ENCODE measurements at regions of chr6 and their contacts with region 1.

Region 1: DNA sequence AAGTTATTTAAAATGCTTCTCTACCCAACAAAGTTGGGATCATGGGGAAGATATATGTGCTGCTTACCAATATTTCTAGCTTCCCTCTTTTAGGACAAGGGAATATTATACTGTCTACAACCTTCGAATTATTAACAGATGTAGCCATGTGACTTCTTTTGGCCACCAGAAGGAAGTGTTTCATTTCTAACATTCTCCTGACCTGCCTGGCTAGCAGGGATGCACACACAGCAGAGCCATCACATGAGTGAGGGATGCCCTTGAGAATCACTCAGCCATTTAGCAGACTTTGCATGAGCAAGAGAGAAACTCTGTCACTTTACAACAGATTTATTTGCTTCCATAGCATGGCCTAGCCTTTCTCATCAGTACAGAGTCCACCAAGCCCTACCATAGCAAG is 230.7 kb upstream of the MARCKS start:
- DNase-seq: no peak
- ATAC-seq: peak; percentile 42
- H3K4me3 ChIP-seq: peak overlapping the region; percentile 25; the same call in 1 of the 2 replicates
- H3K27ac ChIP-seq: peak overlapping the region; percentile 100
- H3K4me1 ChIP-seq: peaks cover 68% of the 10 kb centered on the region
- H3K27me3 ChIP-seq: no peaks in the 10 kb centered on the region
- CTCF ChIP-seq: no peak; a peak in 1 of 6 replicates
- EP300 ChIP-seq: 0 out of 4 replicates have a peak, but pooled peaks of 1 of the 2 experiments have one; percentile 11
- POLR2A ChIP-seq: no peak
- RAD21 ChIP-seq: peak; percentile 39; the same call in 1 of the 2 replicates

Region 2: GRCh38 chr6:113182370-113183141 is 443.9 kb before region 1 on chr6:
- CTCF ChIA-PET with region 1: no interaction called
- POLR2A ChIA-PET with region 1: no interaction called
- RAD21 ChIA-PET with region 1: no interaction called
- SMC1A ChIA-PET with region 1: no interaction called
- in situ Hi-C with region 1: no loop called
- intact Hi-C with region 1: no loop called
- DNase-seq: no peak
- ATAC-seq: no peak
- H3K4me3 ChIP-seq: no peak overlapping the region
- H3K27ac ChIP-seq: no peak overlapping the region
- H3K4me1 ChIP-seq: no peaks in the 10 kb centered on the region
- H3K27me3 ChIP-seq: no peaks in the 10 kb centered on the region
- CTCF ChIP-seq: no peak; a peak in 1 of 6 replicates
- EP300 ChIP-seq: no peak
- POLR2A ChIP-seq: no peak
- RAD21 ChIP-seq: no peak

Region 3: DNA sequence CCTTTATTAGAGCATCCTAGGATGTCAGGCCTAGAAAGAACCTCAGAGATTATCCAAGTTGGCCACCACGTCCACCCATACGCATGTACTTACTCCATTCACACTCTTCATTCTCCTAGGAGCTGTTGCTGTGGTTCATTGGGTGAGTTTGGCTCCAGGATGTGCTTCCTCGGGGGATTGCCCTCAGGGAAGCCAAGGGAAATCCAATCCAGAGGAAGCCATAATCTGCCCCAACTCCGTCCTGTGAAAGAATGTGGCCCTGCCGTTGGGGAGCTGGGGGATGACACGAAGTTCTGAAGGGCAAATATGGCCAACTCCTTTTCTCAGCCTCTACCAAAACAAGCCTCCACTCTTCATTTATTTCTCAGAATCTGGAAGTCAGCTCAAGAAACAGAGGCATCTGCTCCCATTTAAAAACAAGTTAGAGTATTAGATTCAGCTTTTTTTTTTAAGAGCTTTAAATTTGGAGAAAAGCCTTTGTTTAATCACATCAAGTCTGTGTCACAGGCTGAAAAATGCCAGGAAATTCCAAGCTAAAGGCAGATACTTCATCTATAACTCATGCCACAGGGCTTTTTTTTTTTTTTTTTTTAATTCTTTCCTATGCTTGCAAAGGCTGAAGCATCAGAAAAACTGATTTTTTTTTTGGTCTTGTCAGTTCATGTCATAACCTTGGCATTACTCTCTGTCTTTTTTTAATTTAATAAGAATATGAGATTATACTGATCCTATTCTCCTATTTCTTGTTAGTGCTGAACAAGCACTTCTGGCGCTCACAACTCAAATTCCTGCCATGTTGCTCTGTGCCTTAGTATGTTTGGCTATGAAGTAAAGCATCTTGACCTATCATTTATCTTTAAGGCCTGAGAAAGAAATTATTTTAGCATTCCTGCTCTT is 250.3 kb before region 1 on chr6:
- CTCF ChIA-PET with region 1: no interaction called
- POLR2A ChIA-PET with region 1: no interaction called
- RAD21 ChIA-PET with region 1: interaction called, 4 read pairs
- SMC1A ChIA-PET with region 1: interaction called, 4 read pairs
- in situ Hi-C with region 1: no loop called
- intact Hi-C with region 1: loop called (anchors 5 kb)
- DNase-seq: no peak
- ATAC-seq: no peak
- H3K4me3 ChIP-seq: no peak overlapping the region
- H3K27ac ChIP-seq: no peak overlapping the region
- H3K4me1 ChIP-seq: no peaks in the 10 kb centered on the region
- H3K27me3 ChIP-seq: no peaks in the 10 kb centered on the region
- CTCF ChIP-seq: no peak
- EP300 ChIP-seq: no peak
- POLR2A ChIP-seq: no peak
- RAD21 ChIP-seq: no peak

Region 4: DNA sequence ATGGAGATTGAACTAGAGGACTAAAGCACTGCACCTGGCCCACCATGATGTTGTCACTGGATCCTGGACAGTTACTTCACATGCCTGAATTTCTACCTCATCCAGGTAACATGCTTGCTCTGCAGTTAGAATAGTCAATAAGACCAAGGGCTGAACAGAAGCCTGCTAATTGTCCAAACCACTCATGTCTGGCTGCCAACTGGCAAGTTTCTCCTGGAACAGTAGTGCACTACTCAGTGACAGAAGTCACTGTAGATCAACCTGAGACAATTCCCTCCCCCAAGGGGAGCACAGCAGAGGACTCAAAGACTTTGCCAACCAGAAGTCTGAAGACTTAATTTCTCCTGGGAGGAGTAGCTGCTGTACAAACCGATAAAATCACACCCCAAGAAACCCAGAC is 223.9 kb before region 1 on chr6:
- CTCF ChIA-PET with region 1: no interaction called
- POLR2A ChIA-PET with region 1: no interaction called
- RAD21 ChIA-PET with region 1: no interaction called
- SMC1A ChIA-PET with region 1: no interaction called
- in situ Hi-C with region 1: no loop called
- intact Hi-C with region 1: no loop called
- DNase-seq: no peak
- ATAC-seq: no peak
- H3K4me3 ChIP-seq: no peak overlapping the region
- H3K27ac ChIP-seq: no peak overlapping the region
- H3K4me1 ChIP-seq: no peaks in the 10 kb centered on the region
- H3K27me3 ChIP-seq: no peaks in the 10 kb centered on the region
- CTCF ChIP-seq: no peak
- EP300 ChIP-seq: no peak
- POLR2A ChIP-seq: no peak
- RAD21 ChIP-seq: no peak

Region 5: DNA sequence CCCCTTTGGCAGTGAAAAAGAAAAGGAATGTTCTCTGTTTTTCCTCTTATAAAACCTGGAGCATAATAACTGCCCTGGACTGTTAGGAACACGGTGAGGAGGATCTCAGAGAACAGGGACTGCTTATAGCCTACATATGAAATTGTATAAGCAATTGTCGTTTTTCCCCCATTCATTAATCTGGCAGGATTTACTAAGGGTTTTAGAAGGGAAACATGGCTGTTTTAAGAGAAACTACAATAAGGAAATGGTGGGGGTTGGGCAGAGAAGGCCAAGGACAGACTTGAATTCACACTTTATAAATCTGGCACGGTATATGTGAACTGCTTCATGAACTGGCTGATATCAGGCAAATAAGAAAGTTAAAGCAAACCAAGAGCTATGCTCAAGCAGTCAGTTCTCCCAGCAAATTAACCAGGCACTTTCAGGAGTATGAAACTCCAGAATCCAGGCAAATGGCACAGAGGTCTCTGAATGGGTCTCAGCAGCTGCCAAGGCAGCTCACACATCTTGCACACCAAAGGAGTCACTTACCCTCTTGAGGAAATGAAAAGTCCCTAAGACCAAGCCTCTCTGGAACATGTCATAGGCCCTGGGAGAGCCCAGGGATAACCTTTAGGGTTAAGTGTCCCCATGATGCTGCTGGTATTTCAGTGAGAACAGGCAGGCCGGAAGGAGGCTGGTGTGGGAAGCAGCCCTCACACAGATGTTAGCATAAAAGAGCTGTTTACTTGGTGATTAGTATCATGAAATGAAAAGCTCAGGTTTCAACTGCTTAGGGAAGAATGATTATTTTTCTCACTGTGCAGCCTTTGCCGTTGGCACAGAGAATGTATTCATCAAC is 29.9 kb before region 1 on chr6:
- CTCF ChIA-PET with region 1: interaction called, 3 read pairs
- POLR2A ChIA-PET with region 1: interaction called, 3 read pairs
- RAD21 ChIA-PET with region 1: interaction called, 8 read pairs
- SMC1A ChIA-PET with region 1: interaction called, 25 read pairs
- in situ Hi-C with region 1: no loop called
- intact Hi-C with region 1: no loop called
- DNase-seq: no peak
- ATAC-seq: peak; percentile 10
- H3K4me3 ChIP-seq: no peak overlapping the region
- H3K27ac ChIP-seq: no peak overlapping the region
- H3K4me1 ChIP-seq: no peaks in the 10 kb centered on the region
- H3K27me3 ChIP-seq: no peaks in the 10 kb centered on the region
- CTCF ChIP-seq: no peak
- EP300 ChIP-seq: no peak
- POLR2A ChIP-seq: no peak
- RAD21 ChIP-seq: no peak

Region 6: DNA sequence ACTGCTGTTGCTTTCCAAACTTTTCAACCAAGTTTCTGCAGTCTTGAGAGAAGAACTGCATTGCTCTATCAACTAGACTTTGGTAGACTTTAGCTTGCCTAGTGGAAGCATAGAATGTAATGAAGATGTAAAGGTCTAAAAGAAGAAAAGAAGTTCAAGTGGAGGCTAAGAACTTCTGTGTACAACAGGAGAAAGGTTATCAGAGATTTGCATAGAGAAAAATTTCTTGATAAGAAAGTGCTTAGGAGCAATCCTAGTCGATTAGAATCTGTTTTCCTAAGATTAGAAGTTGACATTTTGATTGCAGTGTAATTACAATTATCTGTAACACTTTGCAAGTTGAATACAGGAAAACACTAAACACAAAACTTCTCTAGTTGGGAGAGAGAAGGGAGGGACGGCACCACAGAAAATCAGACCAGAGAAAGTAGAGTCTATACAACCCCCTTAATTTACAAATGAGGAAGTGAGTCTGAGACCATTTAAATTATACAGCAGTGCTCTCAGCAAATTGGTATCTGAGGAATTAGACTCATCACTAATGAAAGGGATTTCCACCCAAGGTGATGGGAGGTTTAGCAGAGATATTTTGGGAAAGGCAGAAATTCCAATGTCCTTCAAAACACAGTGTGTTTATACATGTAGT is 36.3 kb after region 1 on chr6:
- CTCF ChIA-PET with region 1: interaction called, 5 read pairs
- POLR2A ChIA-PET with region 1: interaction called, 3 read pairs
- RAD21 ChIA-PET with region 1: interaction called, 19 read pairs
- SMC1A ChIA-PET with region 1: interaction called, 77 read pairs
- in situ Hi-C with region 1: no loop called
- intact Hi-C with region 1: no loop called
- DNase-seq: no peak
- ATAC-seq: peak; percentile 89
- H3K4me3 ChIP-seq: no peak overlapping the region; the same call in 1 of the 2 replicates
- H3K27ac ChIP-seq: no peak overlapping the region; the same call in 1 of the 2 replicates
- H3K4me1 ChIP-seq: peaks cover 39% of the 10 kb centered on the region
- H3K27me3 ChIP-seq: no peaks in the 10 kb centered on the region
- CTCF ChIP-seq: no peak
- EP300 ChIP-seq: no peak; a peak in 1 of 4 replicates
- POLR2A ChIP-seq: no peak
- RAD21 ChIP-seq: no peak

Region 7: DNA sequence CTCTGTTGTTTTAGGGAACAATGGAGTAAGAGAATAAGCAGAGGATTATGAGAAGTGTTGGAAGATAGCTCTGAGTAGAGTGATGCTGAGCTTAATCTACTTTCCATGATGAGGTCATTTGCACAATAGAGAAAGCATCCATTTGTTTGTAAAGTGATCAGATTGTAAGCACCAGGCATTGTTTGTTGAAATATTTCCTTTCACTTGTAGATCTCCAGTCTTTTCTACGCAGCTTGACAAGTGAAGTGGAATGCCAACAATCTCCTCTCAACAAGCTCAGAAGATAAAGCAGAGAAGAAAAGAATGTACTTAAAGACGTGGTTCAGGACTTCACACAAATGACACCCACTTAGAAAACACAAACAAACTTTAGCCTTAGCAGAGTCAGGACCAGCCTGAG is 150.5 kb after region 1 on chr6:
- CTCF ChIA-PET with region 1: no interaction called
- POLR2A ChIA-PET with region 1: no interaction called
- RAD21 ChIA-PET with region 1: no interaction called
- SMC1A ChIA-PET with region 1: no interaction called
- in situ Hi-C with region 1: no loop called
- intact Hi-C with region 1: no loop called
- DNase-seq: no peak
- ATAC-seq: no peak
- H3K4me3 ChIP-seq: no peak overlapping the region
- H3K27ac ChIP-seq: no peak overlapping the region
- H3K4me1 ChIP-seq: no peaks in the 10 kb centered on the region
- H3K27me3 ChIP-seq: no peaks in the 10 kb centered on the region
- CTCF ChIP-seq: no peak
- EP300 ChIP-seq: no peak
- POLR2A ChIP-seq: no peak
- RAD21 ChIP-seq: no peak

Region 8: DNA sequence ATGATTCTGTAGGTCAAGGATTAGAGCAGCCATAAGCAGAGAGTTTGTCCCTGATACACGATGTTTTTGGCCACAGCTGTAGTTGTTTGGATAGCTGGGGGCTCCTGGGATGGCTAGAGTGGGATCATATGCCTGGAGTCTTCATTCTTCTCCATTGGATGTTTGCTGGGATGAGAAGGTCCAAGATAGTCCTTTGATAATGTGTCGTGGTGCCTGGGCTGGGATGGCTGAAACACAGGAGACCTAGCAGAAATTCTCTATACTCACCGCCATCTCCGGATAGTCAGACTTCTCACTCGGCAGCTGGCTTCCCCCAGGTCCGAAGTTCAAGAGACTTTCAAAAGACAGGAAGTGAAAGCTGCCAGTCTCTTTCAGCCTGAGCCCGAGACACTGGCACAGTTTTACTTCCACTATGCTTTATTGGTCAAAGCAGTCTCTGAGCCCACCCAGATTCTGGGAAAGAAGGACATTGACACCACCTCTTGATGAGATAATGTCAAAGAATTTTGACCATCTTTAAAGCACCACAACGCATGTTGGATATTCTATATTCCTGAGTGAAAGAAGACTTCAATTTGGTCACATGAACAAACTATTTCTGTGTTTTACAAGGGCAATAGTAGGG is 246.7 kb after region 1 on chr6:
- CTCF ChIA-PET with region 1: interaction called, 5 read pairs
- POLR2A ChIA-PET with region 1: interaction called, 4 read pairs
- RAD21 ChIA-PET with region 1: interaction called, 21 read pairs
- SMC1A ChIA-PET with region 1: interaction called, 23 read pairs
- in situ Hi-C with region 1: no loop called
- intact Hi-C with region 1: no loop called
- DNase-seq: no peak
- ATAC-seq: peak; percentile 89
- H3K4me3 ChIP-seq: peak overlapping the region; percentile 65
- H3K27ac ChIP-seq: no peak overlapping the region; the same call in 1 of the 2 replicates
- H3K4me1 ChIP-seq: peaks cover 7% of the 10 kb centered on the region
- H3K27me3 ChIP-seq: no peaks in the 10 kb centered on the region
- CTCF ChIP-seq: peak in 1 of 3 experiments; percentile 17; a peak in 2 of 6 replicates
- EP300 ChIP-seq: peak; percentile 48 to 67; a peak in 2 of 4 replicates
- POLR2A ChIP-seq: no peak
- RAD21 ChIP-seq: 0 out of 2 replicates have a peak, but pooled peaks have one; percentile 21

Measured in GM12878 (cell line).